ENCODE measurements at regions of chr11 and their contacts with region 1.

Region 1: GRCh38 chr11:119121008-119121810 is at the start of gene HINFP:
- DNase-seq: peak; percentile 100
- ATAC-seq: peak; percentile 98
- H3K4me3 Mint-ChIP-seq: peak within 1 kb of the TSS; percentile 94
- H3K27ac Mint-ChIP-seq: peak within 1 kb of the TSS; percentile 91
- H3K4me1 Mint-ChIP-seq: peaks cover 25% of the 10 kb centered on the region
- H3K27me3 Mint-ChIP-seq: no peaks in the 10 kb centered on the region
- total RNA-seq, gene HINFP: 24.0 to 27.2 TPM

Region 2: GRCh38 chr11:119030329-119031049 is 90.7 kb before region 1 on chr11 and contains the start of gene SLC37A4:
- CTCF ChIA-PET with region 1: interaction called, 4 read pairs
- POLR2A ChIA-PET with region 1: no interaction called
- intact Hi-C with region 1: loop called in 1 of 2 experiments (anchors 1 kb)
- DNase-seq: peak; percentile 99
- ATAC-seq: peak; percentile 94
- H3K4me3 Mint-ChIP-seq: peak within 1 kb of the TSS; percentile 76
- H3K27ac Mint-ChIP-seq: peak within 1 kb of the TSS; percentile 86
- H3K4me1 Mint-ChIP-seq: peaks cover 19% of the 10 kb centered on the region
- H3K27me3 Mint-ChIP-seq: no peaks in the 10 kb centered on the region
- total RNA-seq, gene SLC37A4: 26.2 to 36.2 TPM

Region 3: DNA sequence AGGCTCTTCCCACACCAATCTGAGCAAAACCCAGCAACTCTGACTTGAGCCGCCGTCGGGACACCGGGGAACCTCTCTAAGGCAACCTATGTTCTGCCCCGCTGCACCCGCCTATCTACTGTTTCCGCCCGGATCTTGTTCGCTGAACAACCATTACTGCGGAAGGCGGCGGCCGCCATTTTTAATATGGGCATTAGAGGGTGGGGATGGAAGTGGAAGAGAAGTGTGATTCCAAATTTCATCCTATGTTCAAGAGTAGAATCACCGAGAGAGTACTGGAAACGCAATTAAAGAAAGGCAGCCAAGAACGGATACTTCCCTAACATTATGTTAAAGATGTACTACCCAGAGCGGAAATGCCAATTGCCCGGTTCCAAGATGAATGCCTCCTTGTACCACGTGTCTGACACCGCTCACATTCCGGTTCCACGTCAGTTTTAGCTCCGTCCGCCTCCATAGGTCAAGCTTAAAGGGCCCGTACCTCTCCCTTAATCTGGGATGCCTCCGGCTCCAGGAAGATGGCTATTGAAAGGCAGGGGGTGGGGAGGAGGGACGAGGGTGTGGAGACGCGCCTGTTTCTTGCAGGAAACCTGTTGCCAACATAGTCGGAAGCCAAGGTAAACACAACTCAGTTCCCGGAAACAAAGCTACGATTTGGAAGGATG is 19.3 kb before region 1 on chr11 and contains the start of gene DPAGT1:
- CTCF ChIA-PET with region 1: interaction called, 9 read pairs
- POLR2A ChIA-PET with region 1: interaction called, 12 read pairs
- intact Hi-C with region 1: loop called (anchors 1 to 2 kb)
- DNase-seq: peak; percentile 93
- ATAC-seq: peak; percentile 86
- H3K4me3 Mint-ChIP-seq: peak within 1 kb of the TSS; percentile 95
- H3K27ac Mint-ChIP-seq: peak within 1 kb of the TSS; percentile 100
- H3K4me1 Mint-ChIP-seq: peaks cover 42% of the 10 kb centered on the region
- H3K27me3 Mint-ChIP-seq: no peaks in the 10 kb centered on the region
- total RNA-seq, gene DPAGT1: 57.8 to 73.5 TPM

Region 4: DNA sequence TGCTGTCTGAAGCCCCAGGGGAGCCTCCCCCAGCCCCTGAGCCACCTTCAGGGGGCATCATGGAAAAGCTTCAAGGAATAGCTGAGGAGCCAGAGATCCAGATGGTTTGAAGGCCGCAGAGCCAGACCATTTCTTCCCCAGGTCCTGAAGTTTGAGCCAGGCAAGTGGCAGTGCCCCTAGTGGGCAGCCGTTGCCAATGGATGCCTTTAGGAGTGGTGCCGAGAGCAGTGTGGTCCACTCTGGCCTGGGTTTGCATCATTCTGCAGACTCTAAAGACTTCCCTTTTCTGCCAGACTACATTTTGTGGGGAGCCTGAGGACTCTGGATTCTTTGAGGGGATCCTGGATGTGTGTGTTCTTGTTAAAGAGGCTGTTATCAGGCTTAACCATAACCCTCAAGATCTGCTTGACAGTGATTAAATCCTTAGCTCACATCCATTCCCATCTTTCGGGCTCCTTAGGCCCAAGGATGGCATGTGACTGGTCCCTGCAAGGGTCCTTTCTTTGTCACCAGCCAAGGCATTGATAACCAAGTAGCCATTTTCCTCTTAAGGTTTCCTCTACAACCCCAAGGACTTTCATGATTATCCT is 13.3 kb after region 1 on chr11:
- CTCF ChIA-PET with region 1: no interaction called
- POLR2A ChIA-PET with region 1: no interaction called
- intact Hi-C with region 1: no loop called
- DNase-seq: peak; percentile 37
- ATAC-seq: peak; percentile 60
- H3K4me3 Mint-ChIP-seq: no peak overlapping the region
- H3K27ac Mint-ChIP-seq: no peak overlapping the region
- H3K4me1 Mint-ChIP-seq: peaks cover 2% of the 10 kb centered on the region
- H3K27me3 Mint-ChIP-seq: peaks cover 6% of the 10 kb centered on the region

Region 5: GRCh38 chr11:119168471-119169281 is 47.5 kb after region 1 on chr11 and contains the start of gene NLRX1:
- CTCF ChIA-PET with region 1: interaction called, 3 read pairs
- POLR2A ChIA-PET with region 1: no interaction called
- intact Hi-C with region 1: loop called (anchors 1 to 5 kb)
- DNase-seq: peak; percentile 93
- ATAC-seq: peak; percentile 94
- H3K4me3 Mint-ChIP-seq: peak within 1 kb of the TSS; percentile 88
- H3K27ac Mint-ChIP-seq: peak within 1 kb of the TSS; percentile 90
- H3K4me1 Mint-ChIP-seq: peaks cover 11% of the 10 kb centered on the region
- H3K27me3 Mint-ChIP-seq: no peaks in the 10 kb centered on the region
- total RNA-seq, gene NLRX1: 18.2 to 25.0 TPM

Region 6: DNA sequence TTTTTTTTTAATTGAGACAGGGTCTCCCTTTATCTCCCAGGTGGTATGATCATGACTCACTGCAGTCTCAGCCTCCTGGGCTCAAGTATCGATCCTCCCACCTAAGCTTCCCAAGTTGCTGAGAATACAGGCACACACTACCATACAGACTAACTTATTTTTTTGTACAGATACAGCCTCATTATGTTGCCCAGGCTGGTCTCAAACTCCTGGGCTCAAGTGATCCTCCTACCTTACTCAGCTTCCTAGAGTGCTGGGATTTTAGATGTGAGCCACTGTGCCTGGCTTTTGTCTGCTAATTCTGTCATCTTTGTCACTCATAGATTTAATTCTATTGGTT is 128.4 kb after region 1 on chr11:
- CTCF ChIA-PET with region 1: no interaction called
- POLR2A ChIA-PET with region 1: no interaction called
- intact Hi-C with region 1: no loop called
- DNase-seq: no peak
- ATAC-seq: peak; percentile 27
- H3K4me3 Mint-ChIP-seq: no peak overlapping the region
- H3K27ac Mint-ChIP-seq: peak overlapping the region; percentile 61
- H3K4me1 Mint-ChIP-seq: peaks cover 48% of the 10 kb centered on the region
- H3K27me3 Mint-ChIP-seq: no peaks in the 10 kb centered on the region